Upper lobe of right lung (tissue), 1 donor: ENCODE measurements at regions of chr22 and their contacts with region 1.

Region 1: DNA sequence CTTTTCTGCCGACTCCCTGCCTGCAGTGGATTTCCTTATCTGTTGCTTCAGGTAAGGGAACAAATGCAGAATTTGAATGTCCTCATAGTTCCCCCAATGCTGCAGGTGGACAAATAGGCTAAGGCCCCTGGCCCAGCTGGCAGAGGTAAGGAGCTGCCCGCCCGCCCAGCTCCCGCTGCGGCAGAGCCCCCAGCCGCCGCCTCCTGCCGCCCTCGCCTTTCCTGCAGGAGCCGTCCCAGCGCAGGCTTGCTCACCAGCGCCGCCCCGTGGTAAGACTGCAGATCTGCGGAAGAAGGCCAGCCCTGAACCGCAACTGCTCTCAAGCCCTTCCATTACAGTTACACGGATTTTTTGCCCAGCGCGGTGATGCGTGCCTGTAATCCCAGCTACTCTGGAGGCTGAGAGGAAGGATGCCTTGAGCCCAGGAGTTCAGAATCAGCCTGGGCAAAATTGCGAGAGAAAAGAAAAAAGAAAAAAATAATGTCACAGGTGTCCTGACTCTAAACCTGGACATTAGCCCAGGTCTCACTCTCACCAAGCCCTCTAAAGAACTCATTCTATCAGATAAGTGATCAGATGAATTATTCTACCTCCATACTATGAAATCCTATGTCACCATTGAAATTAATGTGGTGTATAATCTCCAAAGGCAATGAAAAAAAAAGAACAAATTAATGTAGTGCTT is 51.2 kb upstream of the EMID1 start:
- DNase-seq: peak; percentile 90
- ATAC-seq: peak; percentile 94
- H3K4me3 ChIP-seq: no peak overlapping the region
- H3K27ac ChIP-seq: no peak overlapping the region
- H3K4me1 ChIP-seq: peaks cover 28% of the 10 kb centered on the region
- H3K27me3 ChIP-seq: no peaks in the 10 kb centered on the region
- CTCF ChIP-seq: peak; percentile 97

Region 2: DNA sequence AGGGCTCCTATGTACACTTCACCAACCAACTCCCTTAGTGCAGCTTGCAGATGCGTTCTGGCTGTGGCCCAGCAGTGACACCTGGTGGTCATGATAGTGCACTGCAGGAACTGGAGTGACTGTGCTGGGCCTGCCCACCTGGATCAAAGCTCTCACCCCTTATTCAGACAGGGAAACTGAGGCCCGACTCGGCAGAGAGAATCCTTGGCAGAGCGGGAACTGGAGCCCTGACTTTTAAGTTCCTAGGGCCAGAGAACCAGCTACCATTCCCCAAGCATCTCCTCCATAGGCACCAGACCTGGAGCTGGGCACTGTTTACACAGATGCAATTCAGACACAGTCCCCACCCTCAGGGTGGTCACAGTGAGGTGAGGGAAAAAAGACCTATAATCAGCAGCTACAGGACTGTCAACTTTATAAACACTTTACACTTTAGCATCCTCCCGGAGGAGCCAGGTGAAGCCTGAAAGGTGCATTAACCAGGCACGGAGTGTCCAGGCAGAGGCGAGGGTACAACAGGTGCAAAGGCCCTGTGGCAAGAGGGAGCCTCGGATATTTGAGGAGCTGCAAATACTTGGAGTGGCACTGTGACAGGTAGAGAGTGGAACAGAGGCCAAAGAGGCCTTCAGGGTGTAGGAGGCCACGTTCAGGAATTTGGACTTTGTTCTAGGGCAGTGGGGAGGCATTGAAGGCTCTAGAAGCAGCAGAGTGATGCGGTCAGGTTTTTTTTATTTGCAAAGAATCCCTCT is 91.3 kb after region 1 on chr22:
- intact Hi-C with region 1: loop called (anchors 5 kb)
- DNase-seq: peak; percentile 80
- ATAC-seq: peak; percentile 97
- H3K4me3 ChIP-seq: no peak overlapping the region
- H3K27ac ChIP-seq: no peak overlapping the region
- H3K4me1 ChIP-seq: peaks cover 6% of the 10 kb centered on the region
- H3K27me3 ChIP-seq: no peaks in the 10 kb centered on the region
- CTCF ChIP-seq: peak; percentile 97